Activated CD4-positive, alpha-beta T cell treated with anti-CD3 and anti-CD28 coated beads for 36 hours (primary cell): ENCODE measurements at regions of chr12 and their contacts with region 1.

Region 1: GRCh38 chr12:64696080-64696741 is 63.0 kb downstream of the GNS start:
- DNase-seq: no peak
- ATAC-seq: no peak
- H3K4me3 Mint-ChIP-seq: no peak overlapping the region
- H3K27ac Mint-ChIP-seq: no peak overlapping the region
- H3K4me1 Mint-ChIP-seq: peaks cover 75% of the 10 kb centered on the region
- H3K27me3 Mint-ChIP-seq: no peaks in the 10 kb centered on the region

Region 2: DNA sequence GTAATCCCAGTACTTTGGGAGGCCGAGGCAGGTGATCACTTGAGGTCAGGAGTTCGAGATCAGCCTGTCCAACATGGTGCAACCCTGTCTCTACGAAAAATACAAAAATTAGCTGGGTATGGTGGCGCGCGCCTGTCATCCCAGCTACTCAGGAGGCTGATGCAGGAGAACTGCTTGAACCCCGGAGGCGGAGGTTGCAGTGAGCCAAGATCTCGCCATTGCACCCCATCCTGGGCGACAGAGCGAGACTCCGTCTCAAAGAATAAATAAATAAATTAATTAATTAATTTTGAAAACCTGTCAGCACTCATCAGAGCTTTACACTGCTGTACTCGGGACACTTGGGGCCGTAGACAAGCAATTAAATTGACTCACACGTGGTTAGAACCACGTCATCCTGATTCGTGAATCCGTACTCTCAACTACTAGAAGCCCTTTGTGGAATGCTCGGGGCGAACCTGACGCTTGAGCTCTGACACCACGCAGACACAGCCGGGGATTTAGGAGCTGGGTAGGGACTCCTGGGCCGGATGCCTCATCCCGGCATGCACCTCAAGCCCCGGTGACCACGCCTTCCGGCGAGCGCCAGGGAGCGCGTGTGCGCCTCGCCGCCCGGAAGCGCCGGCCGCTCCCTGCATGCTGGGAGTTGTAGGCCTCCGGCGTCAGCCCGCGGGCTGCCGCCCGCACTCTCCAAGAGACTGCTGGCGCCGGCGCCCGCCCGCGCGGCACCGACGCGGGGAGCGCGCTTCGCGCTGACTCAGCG is 292.3 kb before region 1 on chr12 and contains the start of gene XPOT:
- CTCF ChIA-PET with region 1: no interaction called
- POLR2A ChIA-PET with region 1: no interaction called
- intact Hi-C with region 1: loop called in 1 of 2 experiments (anchors 2 kb)
- DNase-seq: peak; percentile 97
- ATAC-seq: peak; percentile 90
- H3K4me3 Mint-ChIP-seq: peak within 1 kb of the TSS; percentile 97
- H3K27ac Mint-ChIP-seq: peak within 1 kb of the TSS; percentile 96
- H3K4me1 Mint-ChIP-seq: peaks cover 38% of the 10 kb centered on the region
- H3K27me3 Mint-ChIP-seq: no peaks in the 10 kb centered on the region
- total RNA-seq, gene XPOT: 179 to 187 TPM

Region 3: DNA sequence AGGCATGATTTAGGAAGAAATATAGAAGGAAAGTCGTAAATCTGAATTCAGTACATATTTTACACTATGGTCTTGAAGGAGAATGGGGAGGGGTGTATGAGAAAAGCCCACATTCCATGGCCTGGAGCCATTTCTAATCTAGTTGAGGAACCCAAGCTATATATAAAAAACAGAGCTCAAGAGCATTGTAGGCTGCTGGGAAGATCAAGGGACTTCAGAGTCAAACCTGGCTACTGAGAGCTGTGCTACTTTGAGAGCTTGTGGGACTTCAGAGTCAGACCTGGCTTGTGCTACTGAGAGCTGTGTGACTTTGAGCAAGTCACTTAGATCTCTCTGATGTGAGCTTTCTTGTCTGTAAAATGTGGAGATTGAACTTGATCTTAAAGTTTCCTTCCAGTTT is 185.5 kb before region 1 on chr12:
- CTCF ChIA-PET with region 1: no interaction called
- POLR2A ChIA-PET with region 1: no interaction called
- intact Hi-C with region 1: no loop called
- DNase-seq: no peak
- ATAC-seq: peak; percentile 73
- H3K4me3 Mint-ChIP-seq: no peak overlapping the region
- H3K27ac Mint-ChIP-seq: no peak overlapping the region
- H3K4me1 Mint-ChIP-seq: peaks cover 2% of the 10 kb centered on the region
- H3K27me3 Mint-ChIP-seq: no peaks in the 10 kb centered on the region

Region 4: DNA sequence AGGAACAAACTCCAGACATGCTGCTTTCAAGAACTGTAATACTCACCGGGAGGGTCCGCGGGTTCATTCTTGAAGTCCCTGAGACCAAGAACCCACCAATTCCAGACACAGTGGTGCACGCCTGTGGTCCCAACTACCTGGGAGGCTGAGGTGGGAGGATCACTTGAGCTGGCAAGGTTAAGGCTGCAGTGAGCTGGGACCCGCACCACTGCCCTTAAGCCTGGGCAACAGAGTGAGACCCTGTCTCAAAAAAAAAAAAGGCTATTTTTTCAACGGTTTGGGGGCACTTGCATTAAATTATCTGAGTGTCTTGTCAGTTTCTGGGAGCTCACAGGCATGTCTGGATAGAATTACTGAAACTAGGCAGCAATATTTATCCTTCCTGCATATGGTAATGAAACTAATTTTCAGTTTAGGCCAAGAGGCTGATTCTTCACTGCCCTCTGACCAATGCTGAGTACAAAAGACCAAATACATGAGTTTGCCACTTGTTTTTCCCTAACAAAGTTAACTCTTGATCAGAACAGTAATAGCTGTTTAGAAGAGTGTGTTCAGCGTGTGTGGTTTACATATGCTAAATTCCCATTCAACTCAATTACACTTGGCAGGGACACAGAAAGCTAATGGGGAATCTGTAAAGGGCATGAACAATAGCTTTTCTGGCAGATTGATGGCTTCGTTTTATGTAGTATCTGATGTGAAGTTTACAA is 151.7 kb before region 1 on chr12:
- CTCF ChIA-PET with region 1: interaction called, 128 read pairs
- POLR2A ChIA-PET with region 1: no interaction called
- intact Hi-C with region 1: loop called (anchors 1 kb)
- DNase-seq: no peak
- ATAC-seq: no peak
- H3K4me3 Mint-ChIP-seq: no peak overlapping the region
- H3K27ac Mint-ChIP-seq: no peak overlapping the region
- H3K4me1 Mint-ChIP-seq: peaks cover 3% of the 10 kb centered on the region
- H3K27me3 Mint-ChIP-seq: peaks cover 2% of the 10 kb centered on the region

Region 5: DNA sequence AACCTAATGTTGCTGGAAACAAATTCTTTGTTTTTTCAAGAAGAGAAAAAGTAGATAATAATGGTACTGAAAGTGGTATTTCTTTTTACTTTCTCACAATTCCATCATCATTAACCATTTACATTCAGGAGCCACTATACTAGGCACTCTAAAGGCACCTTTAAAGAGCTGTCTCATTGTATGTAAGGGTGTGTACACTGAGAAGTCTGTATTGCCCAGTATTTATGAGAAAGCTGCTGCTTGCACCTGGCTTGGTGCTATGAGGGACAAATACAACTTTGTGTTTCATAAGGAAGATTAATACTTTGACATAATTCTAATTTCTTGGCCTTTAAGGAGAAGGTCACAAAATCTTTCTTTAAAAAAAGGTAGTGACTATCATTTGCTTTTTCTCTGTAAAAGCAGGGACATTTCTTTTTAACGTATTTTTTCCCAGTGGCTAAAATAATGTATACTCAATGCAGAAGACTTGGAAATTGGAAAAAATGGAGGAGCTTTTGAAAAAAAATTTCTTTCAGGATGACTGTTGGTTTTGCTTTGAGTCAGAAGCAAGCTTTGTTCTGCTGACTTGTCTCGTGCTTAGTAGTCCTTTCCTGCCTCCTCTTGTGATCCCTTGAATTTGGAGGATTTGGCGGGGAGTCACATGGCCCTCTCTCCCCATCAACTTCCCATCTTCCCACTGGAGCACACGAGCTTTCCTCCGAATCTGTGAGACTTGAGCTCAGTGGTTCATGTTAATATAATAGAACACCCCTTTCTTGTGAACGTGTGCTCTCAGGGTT is 35.8 kb before region 1 on chr12:
- CTCF ChIA-PET with region 1: interaction called, 13 read pairs
- POLR2A ChIA-PET with region 1: no interaction called
- intact Hi-C with region 1: no loop called
- DNase-seq: no peak
- ATAC-seq: peak; percentile 40
- H3K4me3 Mint-ChIP-seq: no peak overlapping the region
- H3K27ac Mint-ChIP-seq: peak overlapping the region; percentile 69
- H3K4me1 Mint-ChIP-seq: peaks cover 79% of the 10 kb centered on the region
- H3K27me3 Mint-ChIP-seq: no peaks in the 10 kb centered on the region

Region 6: GRCh38 chr12:64685050-64685449 is 11.2 kb before region 1 on chr12:
- CTCF ChIA-PET with region 1: interaction called, 19 read pairs
- POLR2A ChIA-PET with region 1: interaction called, 3 read pairs
- intact Hi-C with region 1: no loop called
- DNase-seq: peak; percentile 35
- ATAC-seq: no peak
- H3K4me3 Mint-ChIP-seq: no peak overlapping the region
- H3K27ac Mint-ChIP-seq: peak overlapping the region; percentile 83
- H3K4me1 Mint-ChIP-seq: peaks cover 82% of the 10 kb centered on the region
- H3K27me3 Mint-ChIP-seq: no peaks in the 10 kb centered on the region